ENCODE measurements at regions of chr2 and their contacts with region 1.

Region 1: DNA sequence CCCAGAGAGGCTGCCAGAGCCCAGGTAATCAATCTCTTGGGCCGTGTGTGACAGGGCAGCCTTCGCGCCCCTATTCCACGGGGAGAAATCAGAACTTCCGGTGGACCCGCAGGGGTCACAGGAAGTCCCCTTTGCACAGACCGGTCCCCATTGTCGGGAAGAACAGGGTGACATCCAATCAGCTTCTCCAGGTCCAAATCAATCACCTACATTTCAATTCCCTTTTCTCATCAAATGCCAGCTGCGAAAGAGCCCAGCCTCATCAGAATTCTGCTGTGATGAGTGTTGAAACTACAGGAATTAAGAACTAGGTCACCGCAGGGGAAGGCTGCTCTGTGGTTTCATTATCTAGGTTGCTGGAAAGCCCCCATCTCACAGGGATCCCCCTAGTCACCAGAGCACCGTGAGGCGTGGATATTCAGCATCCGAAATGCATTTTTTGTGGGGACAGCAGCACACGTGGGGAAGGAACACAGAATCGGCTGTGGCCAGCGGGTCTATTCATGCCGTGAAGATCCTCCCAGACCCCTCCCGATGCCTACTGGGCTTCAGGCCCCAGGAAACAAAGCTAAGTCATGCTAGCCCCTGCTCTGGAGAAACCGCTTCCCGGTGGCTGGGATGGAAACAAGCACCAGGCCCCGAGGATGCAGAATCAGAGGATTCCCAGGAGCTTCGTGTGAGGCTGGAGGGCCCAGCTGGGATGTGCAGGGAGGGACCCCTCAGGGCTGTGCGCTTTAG is 193.7 kb upstream of the ID2 start:
- DNase-seq: no peak
- ATAC-seq: peak in 4 of 8 donors; percentile 36 to 50 (median 38)
- H3K4me3 ChIP-seq: peak overlapping the region in 4 of 10 donors; percentile 0 to 40 (median 20)
- H3K27ac ChIP-seq: peak overlapping the region in 2 of 10 donors; percentile 3 to 77
- H3K4me1 ChIP-seq: peaks cover 2 to 48% (median 19%) of the 10 kb centered on the region in 9 donors
- H3K27me3 ChIP-seq: no peaks in the 10 kb centered on the region
- CTCF ChIP-seq: no peak

Region 2: DNA sequence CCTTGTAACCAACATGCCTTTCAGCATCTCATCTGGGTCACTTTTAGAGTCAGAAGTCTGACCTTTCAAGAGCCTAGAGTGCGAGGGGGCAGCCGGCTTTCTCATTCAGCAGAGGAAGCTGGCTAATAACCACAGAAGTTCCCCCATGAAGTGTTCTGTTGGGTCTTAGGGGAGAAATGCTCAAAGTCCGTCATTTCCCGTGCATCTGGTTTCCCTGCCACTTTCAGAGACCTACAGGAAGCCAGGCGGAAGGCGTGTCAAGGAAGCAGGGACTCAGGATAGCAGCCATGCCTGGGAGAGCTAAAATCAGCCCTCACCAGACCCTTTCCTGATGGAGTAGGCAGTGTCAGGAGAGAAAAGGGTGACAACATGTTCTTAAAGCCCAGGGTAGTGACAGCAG is 108.1 kb before region 1 on chr2:
- intact Hi-C with region 1: loop called in 1 of 10 experiments (anchors 10 kb)
- DNase-seq: peak in 1 of 2 donors; percentile 71
- ATAC-seq: peak in 7 of 8 donors; percentile 67 to 96 (median 94)
- H3K4me3 ChIP-seq: no peak overlapping the region
- H3K27ac ChIP-seq: peak overlapping the region; percentile 25 to 78 (median 48)
- H3K4me1 ChIP-seq: peaks cover 0 to 16% (median 8%) of the 10 kb centered on the region in 9 donors
- H3K27me3 ChIP-seq: no peaks in the 10 kb centered on the region
- CTCF ChIP-seq: no peak

Region 3: DNA sequence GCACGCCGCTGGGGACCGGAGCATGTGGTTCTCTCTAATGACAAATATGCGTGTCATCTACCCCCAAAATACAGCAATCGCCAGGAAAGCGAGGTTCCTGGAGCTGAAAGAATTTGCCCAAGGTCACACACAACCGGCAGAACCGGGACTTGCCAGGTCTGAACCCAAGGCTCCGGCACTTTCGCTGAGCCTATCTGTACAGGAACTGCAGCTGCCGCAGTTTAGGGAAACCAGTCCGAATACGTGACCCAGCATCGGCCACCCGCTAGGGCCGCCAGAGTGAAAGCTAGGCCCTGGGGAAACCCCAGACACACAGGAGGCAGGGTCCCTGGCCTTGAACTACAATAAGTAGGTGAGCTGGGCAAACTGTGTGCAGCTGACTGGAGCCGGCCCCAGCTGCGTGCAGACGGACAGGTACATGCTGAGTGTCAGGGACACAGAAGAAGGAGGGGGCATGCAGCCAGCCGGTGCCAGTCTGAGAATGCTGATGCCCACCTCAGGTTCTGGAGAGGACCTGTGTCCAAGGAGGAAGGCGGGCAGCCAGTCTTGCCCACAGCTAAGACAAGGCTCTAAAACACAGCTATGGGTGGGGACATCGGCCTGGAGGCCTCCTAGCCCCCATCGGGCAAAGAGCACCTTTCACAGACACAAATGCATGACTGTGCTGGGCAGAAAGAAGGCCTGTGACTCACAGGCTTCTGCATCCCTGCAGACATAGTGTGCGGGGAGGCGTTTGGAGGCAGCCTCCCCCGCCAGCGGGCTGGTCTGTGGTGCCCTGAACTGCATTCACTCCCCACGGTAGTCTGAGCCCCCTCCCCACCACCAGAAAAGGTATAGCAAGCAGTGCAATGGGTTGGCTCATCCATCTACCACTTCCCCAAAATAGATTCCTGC is 86.2 kb after region 1 on chr2:
- intact Hi-C with region 1: loop called in 1 of 10 experiments (anchors 10 kb)
- DNase-seq: no peak
- ATAC-seq: peak in 4 of 8 donors; percentile 10 to 48 (median 24)
- H3K4me3 ChIP-seq: no peak overlapping the region
- H3K27ac ChIP-seq: no peak overlapping the region
- H3K4me1 ChIP-seq: peaks cover 0 to 37% (median 10%) of the 10 kb centered on the region in 9 donors
- H3K27me3 ChIP-seq: no peaks in the 10 kb centered on the region
- CTCF ChIP-seq: no peak

Measured in heart right ventricle (tissue), 16 donors.